ENCODE measurements at regions of chr6 and their contacts with region 1.

Region 1: DNA sequence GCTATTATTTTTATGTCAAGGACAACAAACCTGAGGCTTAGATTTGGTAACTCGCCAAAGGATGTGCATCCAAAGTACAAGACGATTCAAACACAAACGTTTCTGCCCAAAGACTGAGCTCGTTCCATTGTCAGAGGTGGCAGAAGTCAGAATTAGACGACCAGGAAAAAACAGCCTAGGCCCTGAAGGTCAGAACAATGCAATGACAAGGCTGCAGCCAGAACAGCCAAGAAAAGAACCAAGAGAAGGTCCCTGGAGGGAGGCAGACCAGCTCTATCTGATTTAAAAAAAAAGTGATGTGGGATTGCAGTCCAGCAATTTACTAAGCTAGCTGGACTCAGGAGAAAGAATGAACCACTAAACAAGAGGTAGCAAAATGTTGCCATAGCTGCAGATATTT is 54.2 kb downstream of the NCOA7 start:
- DNase-seq: no peak
- ATAC-seq: no peak
- H3K4me3 ChIP-seq: no peak overlapping the region
- H3K27ac ChIP-seq: no peak overlapping the region
- H3K4me1 ChIP-seq: no peaks in the 10 kb centered on the region
- H3K27me3 ChIP-seq: no peaks in the 10 kb centered on the region
- CTCF ChIP-seq: no peak
- EP300 ChIP-seq: no peak
- POLR2A ChIP-seq: no peak
- RAD21 ChIP-seq: no peak

Region 2: GRCh38 chr6:125858427-125859320 is 13.7 kb after region 1 on chr6:
- CTCF ChIA-PET with region 1: interaction called, 10 read pairs
- POLR2A ChIA-PET with region 1: no interaction called
- RAD21 ChIA-PET with region 1: no interaction called
- SMC1A ChIA-PET with region 1: interaction called, 4 read pairs
- in situ Hi-C with region 1: no loop called
- intact Hi-C with region 1: no loop called
- DNase-seq: no peak
- ATAC-seq: peak; percentile 91
- H3K4me3 ChIP-seq: no peak overlapping the region
- H3K27ac ChIP-seq: no peak overlapping the region
- H3K4me1 ChIP-seq: no peaks in the 10 kb centered on the region
- H3K27me3 ChIP-seq: no peaks in the 10 kb centered on the region
- CTCF ChIP-seq: peak; percentile 60 to 64 (median 62); a peak in 5 of 6 replicates
- EP300 ChIP-seq: no peak
- POLR2A ChIP-seq: no peak
- RAD21 ChIP-seq: peak; percentile 63

Measured in GM12878 (cell line).